Transverse colon (tissue), 4 donors: ENCODE measurements at regions of chr4 and their contacts with region 1.

Region 1: DNA sequence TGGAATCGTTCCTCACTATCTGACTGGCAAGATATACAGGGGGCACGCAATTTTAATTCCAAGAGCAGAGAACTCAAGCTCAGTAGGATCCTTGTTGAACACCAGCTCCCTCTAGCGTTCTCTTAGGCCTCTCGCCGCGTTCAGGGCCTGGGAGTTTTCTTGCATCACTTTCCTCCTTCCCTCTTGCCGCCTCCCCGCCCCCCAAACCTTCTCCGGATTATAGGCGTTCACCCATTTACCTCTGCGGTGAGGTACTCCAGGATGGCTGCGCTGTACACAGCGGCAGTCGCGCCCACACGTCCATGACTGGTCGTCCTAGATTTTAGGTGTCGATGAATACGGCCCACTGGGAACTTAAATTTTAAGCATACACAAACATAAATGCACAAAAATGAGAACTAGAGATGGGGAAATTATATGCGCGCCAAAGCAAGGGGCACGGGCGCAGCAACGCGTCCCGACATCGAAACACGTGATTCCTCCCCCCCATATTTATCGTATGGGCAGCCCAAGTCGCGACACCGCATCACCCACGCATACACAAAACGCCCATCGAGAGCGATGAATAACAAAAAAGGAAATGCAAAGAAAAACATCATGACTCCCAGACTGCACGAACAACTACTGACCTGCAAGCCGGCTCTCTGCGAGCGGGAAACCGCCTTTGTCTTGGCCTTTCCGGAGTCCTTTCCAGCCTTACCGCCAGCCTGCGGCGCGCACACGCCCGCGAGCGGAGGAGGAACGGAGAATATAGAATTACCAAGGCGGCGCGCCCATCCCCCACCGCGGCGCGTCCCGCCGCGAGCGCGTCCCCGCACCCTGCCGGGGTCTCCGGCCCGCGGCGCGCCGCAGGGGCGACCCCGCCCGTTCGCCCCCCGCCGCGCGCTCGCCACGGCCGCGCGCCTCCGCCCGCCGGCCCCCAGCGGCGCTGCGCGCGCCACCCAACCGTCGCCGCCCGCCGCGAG is 759 bp downstream of the H2AZ1 start:
- DNase-seq: peak; percentile 95
- H3K4me3 ChIP-seq: peak overlapping the region; percentile 70 to 86 (median 74)
- H3K27ac ChIP-seq: peak overlapping the region; percentile 94 to 99 (median 97)
- H3K4me1 ChIP-seq: peaks cover 17 to 42% (median 35%) of the 10 kb centered on the region in 4 donors
- H3K27me3 ChIP-seq: no peaks in the 10 kb centered on the region
- CTCF ChIP-seq: peak; percentile 80 to 92 (median 88)
- EP300 ChIP-seq: no peak
- POLR2A ChIP-seq: peak; percentile 63

Region 2: DNA sequence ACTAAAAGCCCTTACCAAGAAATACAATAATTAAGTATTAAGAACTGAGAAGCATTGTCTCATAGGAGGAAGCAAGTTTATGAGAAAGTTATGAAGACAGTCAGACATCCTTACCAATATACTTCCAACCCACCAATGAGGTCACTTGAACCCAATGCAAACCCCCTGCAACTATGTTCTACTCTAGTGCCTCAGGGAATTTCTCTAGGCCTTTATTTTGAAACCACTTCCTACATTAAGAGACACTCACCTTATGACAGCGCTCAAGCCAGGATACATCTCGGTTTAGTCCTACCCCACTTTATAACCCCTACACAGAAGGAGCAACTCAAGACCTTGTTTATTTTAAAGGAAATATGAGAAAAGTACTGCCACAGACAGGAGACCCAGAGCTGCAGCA is 1867.4 kb before region 1 on chr4:
- in situ Hi-C with region 1: no loop called
- intact Hi-C with region 1: loop called (anchors 5 kb)
- DNase-seq: no peak
- H3K4me3 ChIP-seq: no peak overlapping the region
- H3K27ac ChIP-seq: no peak overlapping the region
- H3K4me1 ChIP-seq: no peaks in the 10 kb centered on the region
- H3K27me3 ChIP-seq: no peaks in the 10 kb centered on the region
- CTCF ChIP-seq: no peak
- EP300 ChIP-seq: no peak
- POLR2A ChIP-seq: no peak

Region 3: GRCh38 chr4:99563310-99564186 is 385.8 kb before region 1 on chr4 and contains the start of gene TRMT10A:
- in situ Hi-C with region 1: loop called in 3 of 4 experiments (anchors 10 kb)
- intact Hi-C with region 1: loop called (anchors 5 kb)
- DNase-seq: peak; percentile 97
- H3K4me3 ChIP-seq: peak within 1 kb of the TSS; percentile 50 to 66 (median 56)
- H3K27ac ChIP-seq: peak within 1 kb of the TSS; percentile 92 to 98 (median 94)
- H3K4me1 ChIP-seq: peaks cover 0 to 14% (median 4%) of the 10 kb centered on the region in 4 donors
- H3K27me3 ChIP-seq: no peaks in the 10 kb centered on the region
- CTCF ChIP-seq: peak in 3 of 5 experiments; percentile 15 to 48 (median 35)
- EP300 ChIP-seq: no peak
- POLR2A ChIP-seq: peak; percentile 85
- total RNA-seq, gene TRMT10A: 6.0 to 8.1 (median 6.8) TPM in 3 of 4 donors, not detected in the other

Region 4: GRCh38 chr4:99816545-99817308 is 132.6 kb before region 1 on chr4 and contains the start of gene DAPP1:
- in situ Hi-C with region 1: loop called in 2 of 4 experiments (anchors 10 kb)
- intact Hi-C with region 1: no loop called
- DNase-seq: peak; percentile 81
- H3K4me3 ChIP-seq: peak within 1 kb of the TSS in 1 of 4 donors; percentile 36
- H3K27ac ChIP-seq: peak within 1 kb of the TSS; percentile 54 to 58 (median 56)
- H3K4me1 ChIP-seq: peaks cover 0 to 14% (median 5%) of the 10 kb centered on the region in 4 donors
- H3K27me3 ChIP-seq: no peaks in the 10 kb centered on the region
- CTCF ChIP-seq: no peak
- EP300 ChIP-seq: no peak
- POLR2A ChIP-seq: peak; percentile 62
- total RNA-seq, gene DAPP1: 0.41 to 10.7 (median 7.6) TPM

Region 5: DNA sequence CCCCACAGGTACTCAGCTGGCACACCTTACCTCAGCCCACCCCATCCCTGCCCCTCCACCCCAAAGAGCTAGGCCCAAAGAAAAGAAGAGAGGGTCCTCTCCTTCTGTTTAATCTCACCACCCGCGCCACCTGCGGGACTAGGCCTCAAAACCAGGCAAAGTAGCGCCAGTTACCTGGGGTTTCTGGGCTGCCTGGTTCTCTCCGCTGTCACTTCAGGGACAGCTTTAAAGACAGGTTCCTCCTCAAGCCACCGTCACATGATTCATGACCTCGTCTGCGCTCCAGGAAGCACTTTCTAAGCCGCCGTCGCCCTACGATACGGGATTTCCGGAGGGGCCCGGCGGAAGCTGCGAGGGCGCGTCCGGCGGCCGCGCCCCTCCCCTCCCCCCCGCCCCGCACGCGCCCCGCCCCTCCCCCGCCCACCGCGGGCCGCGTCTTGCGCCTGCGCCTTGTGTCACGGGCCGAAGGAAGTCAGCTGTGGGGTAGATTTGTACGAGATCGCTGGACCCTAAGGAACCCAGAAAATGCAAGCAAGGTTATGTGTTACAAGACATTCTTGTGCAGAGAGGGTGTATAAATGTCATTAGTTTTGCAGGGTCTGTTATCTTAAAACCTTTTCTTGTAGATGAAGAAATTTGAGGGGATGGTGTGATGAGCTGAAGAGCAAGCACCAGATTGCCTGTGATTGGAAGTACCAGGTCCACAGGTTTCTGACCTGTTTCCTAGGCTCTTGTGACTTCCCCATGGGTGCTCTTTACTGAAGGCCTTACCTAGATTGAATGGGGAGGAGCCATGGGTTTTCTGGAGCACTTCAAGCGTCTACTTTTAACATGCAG is 54.9 kb before region 1 on chr4 and contains the start of gene LAMTOR3:
- in situ Hi-C with region 1: loop called in 1 of 4 experiments (anchors 10 kb)
- intact Hi-C with region 1: loop called (anchors 5 kb)
- DNase-seq: peak; percentile 94
- H3K4me3 ChIP-seq: peak within 1 kb of the TSS; percentile 57 to 81 (median 76)
- H3K27ac ChIP-seq: peak within 1 kb of the TSS; percentile 86 to 90 (median 89)
- H3K4me1 ChIP-seq: peaks cover 9 to 34% (median 11%) of the 10 kb centered on the region in 4 donors
- H3K27me3 ChIP-seq: no peaks in the 10 kb centered on the region
- CTCF ChIP-seq: no peak
- EP300 ChIP-seq: no peak
- POLR2A ChIP-seq: peak; percentile 76
- total RNA-seq, gene LAMTOR3: 1.00 to 60.3 (median 32.0) TPM

Region 6: DNA sequence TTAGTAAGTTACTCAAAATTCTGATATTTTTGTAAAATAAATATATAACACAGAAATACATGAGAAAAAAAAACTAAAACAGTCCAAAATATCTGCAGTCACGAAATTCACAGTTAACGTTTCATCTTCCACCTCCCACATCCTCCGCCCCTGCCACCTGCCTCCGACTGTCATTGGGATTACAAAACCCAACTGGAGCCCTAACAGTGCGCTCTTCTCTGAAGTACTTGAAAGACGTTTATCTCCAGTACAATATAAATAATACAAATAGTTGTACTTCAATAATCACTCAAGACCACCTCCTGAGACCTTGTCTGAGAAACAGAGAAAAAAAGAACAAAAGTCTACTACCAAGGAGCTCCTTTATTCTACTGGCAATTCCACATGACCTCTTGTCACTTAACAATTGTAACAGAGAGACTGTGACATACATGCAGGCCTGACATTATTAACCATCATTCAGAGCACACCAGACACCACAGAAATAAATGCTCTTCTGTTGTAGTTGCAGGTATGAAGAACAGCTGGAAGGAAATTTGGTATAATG is 1117.4 kb after region 1 on chr4:
- in situ Hi-C with region 1: no loop called
- intact Hi-C with region 1: no loop called
- DNase-seq: no peak
- H3K4me3 ChIP-seq: no peak overlapping the region
- H3K27ac ChIP-seq: no peak overlapping the region
- H3K4me1 ChIP-seq: no peaks in the 10 kb centered on the region
- H3K27me3 ChIP-seq: no peaks in the 10 kb centered on the region
- CTCF ChIP-seq: no peak
- EP300 ChIP-seq: no peak
- POLR2A ChIP-seq: no peak